A549 (cell line): ENCODE measurements at regions of chr9 and their contacts with region 1.

Region 1: DNA sequence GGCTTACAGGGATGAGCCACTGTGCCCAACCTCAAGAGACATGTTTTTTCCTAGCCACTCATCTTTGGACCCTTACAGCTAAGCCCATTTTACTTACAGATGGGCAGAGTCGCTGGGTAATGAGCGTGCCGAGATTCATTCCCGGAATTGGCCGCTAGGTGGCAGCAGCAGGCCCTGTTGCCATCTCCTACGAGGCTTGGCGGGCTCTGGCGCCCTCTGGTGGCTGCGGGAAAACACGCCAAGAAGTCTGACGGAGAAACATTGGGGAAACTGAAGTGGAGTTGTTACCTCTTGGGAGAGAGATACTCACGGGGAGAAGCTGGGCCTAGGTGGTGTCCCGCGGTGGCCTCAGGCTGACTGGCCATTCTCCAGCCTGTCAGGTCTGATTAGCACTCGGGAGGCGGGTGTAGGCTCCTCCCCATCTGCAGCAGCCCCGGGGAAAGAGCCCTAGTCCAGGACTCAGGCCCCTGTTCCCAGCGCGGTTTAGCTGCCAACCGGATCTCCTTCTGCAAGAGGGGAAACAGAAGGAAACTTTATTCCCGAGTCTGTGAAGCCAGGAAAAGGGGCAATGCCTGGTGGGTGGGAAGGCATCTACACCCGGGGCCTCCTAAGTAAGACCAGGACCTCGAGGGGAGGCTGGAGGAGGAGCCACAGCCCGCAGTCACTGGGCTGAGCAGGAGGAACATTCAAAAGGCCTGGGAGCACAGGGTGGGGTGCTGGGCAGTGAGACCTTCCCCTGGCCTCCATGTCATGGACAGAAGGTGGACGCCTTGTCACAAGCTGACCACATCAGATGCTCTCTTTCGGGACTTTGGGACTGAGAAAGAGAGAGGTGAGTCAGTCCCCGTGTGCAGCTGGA is 9.7 kb downstream of the PTGES2 start:
- DNase-seq: peak; percentile 88 to 90
- ATAC-seq: peak; percentile 63 to 87; a peak in 4 of 6 replicates
- H3K4me3 ChIP-seq: no peak overlapping the region
- H3K27ac ChIP-seq: peak overlapping the region in 1 of 2 experiments; percentile 22; a peak in 1 of 6 replicates
- H3K4me1 ChIP-seq: 0 out of 3 replicates have a peak, but pooled peaks cover 2% of the 10 kb centered on the region
- CTCF ChIP-seq: peak; percentile 100
- EP300 ChIP-seq: no peak
- POLR2A ChIP-seq: no peak
- RAD21 ChIP-seq: peak; percentile 96 to 98

Region 2: GRCh38 chr9:127817881-127818434 is 299.9 kb before region 1 on chr9:
- CTCF ChIA-PET with region 1: no interaction called
- POLR2A ChIA-PET with region 1: no interaction called
- DNase-seq: no peak
- ATAC-seq: peak; percentile 9 to 24; a peak in 4 of 6 replicates
- H3K4me3 ChIP-seq: no peak overlapping the region
- H3K27ac ChIP-seq: no peak overlapping the region
- H3K4me1 ChIP-seq: no peaks in the 10 kb centered on the region
- CTCF ChIP-seq: no peak
- EP300 ChIP-seq: no peak
- POLR2A ChIP-seq: no peak
- RAD21 ChIP-seq: no peak

Region 3: GRCh38 chr9:127943731-127944144 is 174.1 kb before region 1 on chr9:
- CTCF ChIA-PET with region 1: interaction called, 61 read pairs
- POLR2A ChIA-PET with region 1: no interaction called
- DNase-seq: peak; percentile 79 to 86
- ATAC-seq: peak; percentile 70 to 89
- H3K4me3 ChIP-seq: no peak overlapping the region
- H3K27ac ChIP-seq: peak overlapping the region; percentile 34 to 58; a peak in 4 of 6 replicates
- H3K4me1 ChIP-seq: peaks cover 18% of the 10 kb centered on the region; the same call in 2 of the 3 replicates
- CTCF ChIP-seq: peak; percentile 82
- EP300 ChIP-seq: no peak; a peak in 1 of 5 replicates
- POLR2A ChIP-seq: no peak
- RAD21 ChIP-seq: peak; percentile 93 to 95

Region 4: DNA sequence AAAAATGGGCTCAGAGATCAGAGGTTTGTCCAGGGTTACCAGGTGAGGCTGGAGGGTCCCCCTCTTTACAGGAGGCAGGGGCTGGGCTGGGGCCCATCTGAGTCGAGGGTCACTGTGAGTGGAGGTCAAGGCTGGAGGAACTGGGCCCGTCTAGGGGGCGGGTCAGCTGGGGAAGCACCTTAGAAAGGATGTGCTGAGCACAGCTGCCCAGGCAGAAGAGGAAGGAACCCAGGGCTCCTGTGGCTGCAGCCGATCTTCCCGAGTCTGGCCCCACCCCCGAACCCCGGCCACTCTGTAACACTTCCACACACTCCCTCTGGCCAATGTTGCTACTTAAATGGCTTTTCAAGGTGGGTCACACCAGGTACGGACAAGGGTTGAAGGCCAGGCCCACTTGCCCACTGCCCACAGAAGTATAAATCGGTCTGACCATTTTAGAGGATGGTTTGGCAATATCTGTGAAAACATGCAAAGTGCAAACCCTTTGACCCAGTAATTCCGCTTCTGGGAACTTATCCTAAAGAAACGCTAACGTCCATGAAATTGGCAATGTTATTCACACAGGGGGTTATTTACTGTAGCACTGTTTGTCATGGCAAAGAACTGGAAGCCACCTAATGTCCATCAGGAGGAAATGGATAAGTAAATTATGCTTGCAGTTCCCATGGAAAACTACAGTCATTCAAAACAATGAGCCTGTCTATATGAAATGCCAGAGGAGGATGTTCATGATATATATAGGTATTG is 106.6 kb before region 1 on chr9:
- CTCF ChIA-PET with region 1: no interaction called
- POLR2A ChIA-PET with region 1: no interaction called
- DNase-seq: peak in 1 of 2 experiments; percentile 87
- ATAC-seq: peak; percentile 72 to 75
- H3K4me3 ChIP-seq: no peak overlapping the region
- H3K27ac ChIP-seq: peak overlapping the region; percentile 72 to 87
- H3K4me1 ChIP-seq: peaks cover 34% of the 10 kb centered on the region
- CTCF ChIP-seq: no peak
- EP300 ChIP-seq: no peak
- POLR2A ChIP-seq: no peak
- RAD21 ChIP-seq: peak in 1 of 2 experiments; percentile 13; a peak in 1 of 5 replicates

Region 5: DNA sequence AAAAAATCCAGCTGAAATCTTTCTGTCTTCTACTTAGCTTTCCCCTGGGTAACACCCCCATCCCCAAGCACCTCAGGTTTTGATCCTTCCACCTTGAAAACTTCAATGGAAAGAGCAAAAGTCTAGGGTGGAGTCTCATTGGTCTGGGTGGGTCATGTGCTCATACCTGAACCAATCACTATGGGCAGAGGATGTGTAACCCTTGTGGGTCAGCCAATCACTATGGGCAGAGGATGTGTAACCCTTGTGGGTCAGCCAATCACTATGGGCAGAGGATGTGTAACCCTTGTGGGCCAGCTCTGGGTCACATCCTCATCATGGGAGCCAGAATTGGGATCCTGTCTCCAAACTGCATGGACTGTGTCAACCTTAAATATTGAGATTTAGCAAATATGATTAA is 69.2 kb before region 1 on chr9:
- CTCF ChIA-PET with region 1: interaction called, 11 read pairs
- POLR2A ChIA-PET with region 1: no interaction called
- DNase-seq: no peak
- ATAC-seq: peak; percentile 58 to 84; a peak in 4 of 6 replicates
- H3K4me3 ChIP-seq: no peak overlapping the region
- H3K27ac ChIP-seq: no peak overlapping the region
- H3K4me1 ChIP-seq: 0 out of 3 replicates have a peak, but pooled peaks cover 4% of the 10 kb centered on the region
- CTCF ChIP-seq: no peak
- EP300 ChIP-seq: no peak
- POLR2A ChIP-seq: no peak
- RAD21 ChIP-seq: no peak

Region 6: DNA sequence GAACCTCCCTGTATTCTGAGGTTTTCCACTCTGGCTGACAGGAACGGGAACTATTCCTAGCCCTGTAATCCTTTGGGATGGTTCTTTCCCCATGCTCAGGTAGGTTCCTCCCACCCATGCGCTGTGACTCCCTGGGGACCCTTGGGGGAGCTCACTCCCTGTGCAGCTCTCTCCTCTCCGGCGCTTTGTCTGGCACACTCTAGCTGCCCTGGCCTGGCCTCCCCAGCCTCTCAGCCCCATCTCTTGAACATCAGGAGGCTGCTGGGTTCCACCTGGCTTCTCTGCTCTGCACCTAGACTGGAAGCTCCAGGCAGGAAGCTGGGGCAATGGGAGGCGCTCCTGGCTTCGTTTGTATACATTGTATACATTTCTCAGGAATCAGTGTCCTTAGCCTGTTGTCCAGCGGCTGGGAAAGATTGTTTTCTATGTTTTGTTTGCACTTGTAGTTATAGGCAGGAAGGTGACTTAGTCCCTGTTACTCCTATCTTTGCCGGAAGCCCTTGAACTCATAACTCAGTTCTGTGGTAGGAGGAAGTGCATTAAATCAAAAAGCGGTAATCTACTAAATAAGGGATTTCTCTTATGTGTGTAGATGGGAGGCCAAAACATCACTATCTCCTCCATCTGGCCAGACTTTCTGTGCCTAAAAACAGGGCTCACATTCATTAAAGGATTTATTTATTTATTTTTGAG is 29.4 kb before region 1 on chr9:
- CTCF ChIA-PET with region 1: interaction called, 290 read pairs
- POLR2A ChIA-PET with region 1: no interaction called
- DNase-seq: no peak
- ATAC-seq: no peak
- H3K4me3 ChIP-seq: no peak overlapping the region
- H3K27ac ChIP-seq: no peak overlapping the region
- H3K4me1 ChIP-seq: peaks cover 7% of the 10 kb centered on the region; the same call in 2 of the 3 replicates
- CTCF ChIP-seq: no peak
- EP300 ChIP-seq: no peak
- POLR2A ChIP-seq: no peak
- RAD21 ChIP-seq: no peak

Region 7: DNA sequence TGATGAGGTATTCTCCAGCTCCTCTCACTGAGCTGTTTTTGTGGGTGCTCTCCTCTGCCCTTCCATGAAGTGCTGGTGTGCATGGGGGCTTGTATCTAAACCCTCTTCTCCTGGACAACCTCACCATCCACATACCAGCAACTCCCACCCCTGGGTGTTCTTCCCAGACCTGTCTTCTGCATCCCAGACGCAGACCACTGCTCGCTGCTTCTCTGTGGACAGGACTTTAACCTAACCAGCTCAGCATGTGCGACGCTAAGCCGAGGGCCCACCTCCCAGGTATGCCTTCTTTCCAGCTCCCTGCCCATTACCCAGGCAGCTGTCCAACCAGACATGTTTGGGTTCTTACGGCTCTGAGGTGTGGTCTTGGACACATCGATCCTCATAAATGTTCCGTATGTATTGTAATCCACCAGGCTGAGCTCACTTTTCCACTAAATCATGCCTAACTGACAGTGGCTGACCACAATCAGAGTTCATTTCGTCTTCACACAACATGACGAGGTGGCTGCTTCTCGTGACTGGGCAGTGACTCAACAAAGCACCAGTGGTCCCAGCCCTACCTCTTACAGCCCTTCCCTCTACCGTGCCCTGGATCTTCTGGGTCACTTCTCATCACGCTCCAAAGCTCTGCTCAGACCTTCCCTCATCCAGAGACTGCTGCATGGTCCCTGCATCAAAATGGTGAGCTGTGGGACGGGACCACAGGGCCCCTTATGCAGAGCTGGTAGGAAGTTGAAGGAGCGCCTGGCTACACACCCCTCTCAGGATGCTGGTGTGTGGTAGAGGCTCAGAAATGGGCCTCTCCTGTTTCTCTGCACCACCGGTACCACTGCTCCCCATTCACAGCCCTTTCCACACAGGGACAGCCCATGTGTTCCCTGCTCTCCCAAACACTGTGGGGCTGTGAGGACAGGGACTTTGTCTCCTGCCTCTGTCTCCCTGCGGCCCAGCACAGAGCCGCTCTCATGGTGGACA is 19.3 kb after region 1 on chr9:
- CTCF ChIA-PET with region 1: interaction called, 181 read pairs
- POLR2A ChIA-PET with region 1: no interaction called
- DNase-seq: no peak
- ATAC-seq: peak; percentile 38 to 40; a peak in 4 of 6 replicates
- H3K4me3 ChIP-seq: no peak overlapping the region
- H3K27ac ChIP-seq: no peak overlapping the region
- H3K4me1 ChIP-seq: 0 out of 3 replicates have a peak, but pooled peaks cover under 1% of the 10 kb centered on the region
- CTCF ChIP-seq: no peak
- EP300 ChIP-seq: no peak
- POLR2A ChIP-seq: no peak
- RAD21 ChIP-seq: no peak

Region 8: DNA sequence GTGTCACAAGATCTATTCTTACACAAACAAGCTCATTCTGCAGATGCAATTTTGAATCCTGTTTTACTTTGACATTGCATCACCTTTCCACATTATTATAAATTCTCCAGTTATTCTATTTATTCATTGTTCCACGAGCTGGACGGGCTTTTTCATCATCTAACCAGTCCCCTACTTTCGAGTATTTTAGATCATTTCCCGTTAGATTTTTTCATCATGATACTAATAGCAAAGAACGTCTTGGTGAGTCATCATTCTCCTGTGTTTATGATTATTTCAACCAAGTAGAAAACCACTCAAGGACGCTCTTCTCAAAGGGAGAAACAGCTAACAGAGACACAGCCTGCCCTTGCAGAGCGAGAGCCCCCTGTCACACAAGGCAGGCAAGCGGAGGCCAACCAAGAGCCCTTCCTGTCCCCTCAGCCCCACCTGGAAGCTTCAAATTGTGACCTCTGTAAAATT is 57.3 kb after region 1 on chr9:
- CTCF ChIA-PET with region 1: interaction called, 19 read pairs
- POLR2A ChIA-PET with region 1: no interaction called
- DNase-seq: no peak
- ATAC-seq: no peak
- H3K4me3 ChIP-seq: no peak overlapping the region
- H3K27ac ChIP-seq: no peak overlapping the region
- H3K4me1 ChIP-seq: no peaks in the 10 kb centered on the region
- CTCF ChIP-seq: no peak
- EP300 ChIP-seq: no peak
- POLR2A ChIP-seq: no peak
- RAD21 ChIP-seq: no peak